Mammary epithelial cell (primary cell): ENCODE measurements at regions of chr6 and their contacts with region 1.

Region 1: GRCh38 chr6:34887753-34888513 is at the start of gene TAF11:
- DNase-seq: peak; percentile 92
- H3K4me3 ChIP-seq: peak within 1 kb of the TSS; percentile 61 to 98 (median 78)
- H3K27ac ChIP-seq: peak within 1 kb of the TSS; percentile 89
- H3K4me1 ChIP-seq: peaks cover 14% of the 10 kb centered on the region
- H3K27me3 ChIP-seq: no peaks in the 10 kb centered on the region
- CTCF ChIP-seq: no peak
- total RNA-seq, gene TAF11: 11.0 to 16.4 TPM

Region 2: GRCh38 chr6:34696739-34697543 is 191.0 kb before region 1 on chr6 and contains the start of gene ILRUN:
- CTCF ChIA-PET with region 1: no interaction called
- dilution Hi-C with region 1: no loop called
- in situ Hi-C with region 1: no loop called
- intact Hi-C with region 1: loop called (anchors 5 kb)
- DNase-seq: peak; percentile 93
- H3K4me3 ChIP-seq: peak within 1 kb of the TSS; percentile 87 to 97 (median 91)
- H3K27ac ChIP-seq: peak within 1 kb of the TSS; percentile 80
- H3K4me1 ChIP-seq: peaks cover 17% of the 10 kb centered on the region
- H3K27me3 ChIP-seq: no peaks in the 10 kb centered on the region
- CTCF ChIP-seq: no peak
- total RNA-seq, gene ILRUN: 40.0 to 67.3 TPM

Region 3: DNA sequence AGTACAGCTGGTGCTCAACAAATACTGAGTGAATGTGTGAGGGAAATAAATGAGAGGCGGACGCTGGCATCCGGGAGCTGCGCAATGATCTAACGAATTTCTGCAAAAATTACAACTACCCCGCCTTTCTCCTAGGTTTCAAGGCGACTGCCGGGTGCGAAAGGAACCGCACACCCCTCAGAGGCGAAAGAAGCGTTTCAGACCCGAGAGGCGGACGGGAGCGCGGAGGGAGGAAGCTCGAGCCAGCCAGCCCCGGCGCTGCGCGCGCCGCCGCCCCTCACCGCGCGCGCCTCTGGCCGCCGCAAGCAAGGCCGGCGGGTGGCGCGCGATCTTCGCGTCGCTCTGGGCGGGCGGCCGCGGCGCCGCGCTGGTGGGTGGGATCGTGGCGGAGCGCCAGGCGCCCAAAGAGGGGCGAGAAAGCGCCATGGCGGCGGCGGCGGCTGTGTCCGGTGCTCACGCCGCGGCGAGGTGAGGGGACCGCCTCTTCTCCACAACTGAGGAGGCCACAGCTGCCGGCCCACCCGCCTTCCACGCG is 96.2 kb before region 1 on chr6 and contains the start of gene BLTP3A:
- CTCF ChIA-PET with region 1: interaction called, 4 read pairs
- dilution Hi-C with region 1: no loop called
- in situ Hi-C with region 1: no loop called
- intact Hi-C with region 1: loop called (anchors 1 kb)
- DNase-seq: peak; percentile 50
- H3K4me3 ChIP-seq: peak within 1 kb of the TSS; percentile 57 to 86 (median 83)
- H3K27ac ChIP-seq: peak within 1 kb of the TSS; percentile 58
- H3K4me1 ChIP-seq: peaks cover 12% of the 10 kb centered on the region
- H3K27me3 ChIP-seq: no peaks in the 10 kb centered on the region
- CTCF ChIP-seq: no peak
- total RNA-seq, gene BLTP3A: 9.6 to 19.2 TPM

Region 4: GRCh38 chr6:34912715-34913464 is 25.0 kb after region 1 on chr6:
- CTCF ChIA-PET with region 1: no interaction called
- dilution Hi-C with region 1: no loop called
- in situ Hi-C with region 1: no loop called
- intact Hi-C with region 1: loop called (anchors 2 kb)
- DNase-seq: peak; percentile 80
- H3K4me3 ChIP-seq: no peak overlapping the region
- H3K27ac ChIP-seq: peak overlapping the region; percentile 23
- H3K4me1 ChIP-seq: peaks cover 17% of the 10 kb centered on the region
- H3K27me3 ChIP-seq: no peaks in the 10 kb centered on the region
- CTCF ChIP-seq: no peak

Region 5: DNA sequence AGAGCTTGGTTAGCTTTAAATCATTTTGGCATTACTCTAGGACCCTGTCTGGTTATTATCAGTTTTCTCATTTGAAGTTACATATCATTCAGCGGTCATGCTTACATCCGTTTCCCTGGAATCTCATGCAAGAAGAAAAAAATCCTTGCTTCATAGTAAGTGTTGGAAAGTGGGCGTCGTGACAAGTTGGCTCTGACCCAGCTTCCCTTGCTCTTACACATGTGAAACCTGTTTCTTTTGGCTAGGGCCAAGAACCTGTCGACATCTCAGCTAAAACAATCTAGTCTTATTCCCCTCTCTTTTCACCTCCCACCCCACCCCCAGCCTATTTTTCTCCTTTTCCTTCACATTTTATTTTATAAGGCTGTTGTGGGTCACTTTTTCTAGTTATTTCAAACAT is 46.6 kb after region 1 on chr6:
- CTCF ChIA-PET with region 1: no interaction called
- dilution Hi-C with region 1: no loop called
- in situ Hi-C with region 1: no loop called
- intact Hi-C with region 1: no loop called
- DNase-seq: peak; percentile 9
- H3K4me3 ChIP-seq: no peak overlapping the region
- H3K27ac ChIP-seq: no peak overlapping the region
- H3K4me1 ChIP-seq: no peaks in the 10 kb centered on the region
- H3K27me3 ChIP-seq: no peaks in the 10 kb centered on the region
- CTCF ChIP-seq: no peak

Region 6: GRCh38 chr6:35139908-35140655 is 252.1 kb after region 1 on chr6:
- CTCF ChIA-PET with region 1: no interaction called
- dilution Hi-C with region 1: no loop called
- in situ Hi-C with region 1: no loop called
- intact Hi-C with region 1: loop called (anchors 5 kb)
- DNase-seq: peak; percentile 36
- H3K4me3 ChIP-seq: no peak overlapping the region
- H3K27ac ChIP-seq: no peak overlapping the region
- H3K4me1 ChIP-seq: no peaks in the 10 kb centered on the region
- H3K27me3 ChIP-seq: no peaks in the 10 kb centered on the region
- CTCF ChIP-seq: peak; percentile 87 to 89